Activated CD8-positive, alpha-beta T cell treated with anti-CD3 and anti-CD28 coated beads for 36 hours (primary cell): ENCODE measurements at regions of chr7 and their contacts with region 1.

Region 1: GRCh38 chr7:97835296-97836138 is 36.7 kb downstream of the ASNS start:
- DNase-seq: peak; percentile 81
- ATAC-seq: peak; percentile 83
- H3K4me3 Mint-ChIP-seq: no peak overlapping the region
- H3K27ac Mint-ChIP-seq: no peak overlapping the region
- H3K4me1 Mint-ChIP-seq: no peaks in the 10 kb centered on the region
- H3K27me3 Mint-ChIP-seq: peaks cover 17% of the 10 kb centered on the region
- CTCF ChIP-seq: peak; percentile 77

Region 2: DNA sequence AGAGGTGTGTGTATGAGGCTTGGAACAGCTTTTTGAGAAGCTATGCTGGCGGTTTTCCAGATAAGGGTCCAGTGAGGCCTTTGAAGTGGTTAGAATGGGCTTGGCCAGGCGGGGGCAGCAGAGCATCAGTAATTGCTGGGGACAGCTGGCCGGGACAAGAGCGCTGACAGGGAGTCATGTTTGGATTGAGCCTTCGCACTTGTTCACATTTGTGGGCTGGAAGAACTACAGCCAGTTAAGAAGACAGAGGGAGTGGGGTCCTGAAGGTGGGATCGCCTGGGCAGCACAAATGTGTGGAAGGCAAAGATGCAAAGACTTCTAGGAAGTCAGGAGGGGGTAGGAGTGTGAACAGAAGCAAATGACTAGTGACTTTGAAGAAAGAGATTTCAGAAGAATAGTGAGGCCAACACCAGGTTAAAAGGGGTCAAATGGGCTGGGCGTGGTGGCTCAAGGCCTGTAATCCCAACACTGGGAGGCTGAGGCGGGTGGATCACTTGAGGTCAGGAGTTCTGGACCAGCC is 730.7 kb before region 1 on chr7:
- CTCF ChIA-PET with region 1: interaction called, 13 read pairs
- POLR2A ChIA-PET with region 1: no interaction called
- intact Hi-C with region 1: loop called (anchors 5 kb)
- DNase-seq: peak; percentile 81
- ATAC-seq: peak; percentile 84
- H3K4me3 Mint-ChIP-seq: no peak overlapping the region
- H3K27ac Mint-ChIP-seq: no peak overlapping the region
- H3K4me1 Mint-ChIP-seq: no peaks in the 10 kb centered on the region
- H3K27me3 Mint-ChIP-seq: peaks cover 26% of the 10 kb centered on the region
- CTCF ChIP-seq: peak; percentile 63

Region 3: DNA sequence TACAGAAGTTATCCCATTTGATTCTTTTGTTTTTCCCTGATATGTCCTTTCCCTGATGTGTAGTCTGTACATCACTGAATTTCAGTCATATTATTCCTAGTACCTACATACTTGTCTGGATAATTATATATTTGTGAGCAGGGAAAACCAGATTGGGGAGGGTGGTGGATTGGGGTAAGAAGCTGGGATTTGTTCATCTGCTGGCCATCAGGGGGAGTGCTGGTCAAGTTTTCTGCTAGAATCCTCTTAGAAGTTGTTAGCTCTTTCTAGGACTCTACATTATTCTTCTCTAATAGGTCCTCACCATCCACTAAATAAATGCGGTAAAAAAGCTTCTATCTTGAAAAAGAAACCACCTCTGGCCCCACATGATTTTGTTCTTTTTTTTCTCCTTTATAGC is 336.3 kb before region 1 on chr7:
- CTCF ChIA-PET with region 1: interaction called, 5 read pairs
- POLR2A ChIA-PET with region 1: no interaction called
- intact Hi-C with region 1: loop called (anchors 5 kb)
- DNase-seq: peak; percentile 28
- ATAC-seq: no peak
- H3K4me3 Mint-ChIP-seq: no peak overlapping the region
- H3K27ac Mint-ChIP-seq: no peak overlapping the region
- H3K4me1 Mint-ChIP-seq: no peaks in the 10 kb centered on the region
- H3K27me3 Mint-ChIP-seq: peaks cover 5% of the 10 kb centered on the region
- CTCF ChIP-seq: peak; percentile 41

Region 4: DNA sequence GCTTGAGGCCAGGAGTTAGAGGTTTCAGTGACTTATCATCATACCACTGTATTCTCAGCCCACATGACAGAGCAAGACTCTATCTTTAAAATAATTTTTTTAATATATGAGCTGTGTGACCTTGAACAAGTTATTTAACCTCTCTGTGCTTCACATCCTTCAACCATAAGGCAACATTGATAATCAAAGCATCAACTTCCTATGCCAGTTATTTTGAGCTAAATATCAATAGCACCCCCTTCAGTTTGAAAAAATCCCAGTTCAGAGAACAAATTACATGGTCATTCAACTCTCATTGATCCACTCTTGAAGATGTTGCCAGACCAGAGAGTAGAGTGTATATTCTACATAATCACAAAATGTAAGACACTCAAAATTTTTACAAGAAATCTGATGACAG is 16.4 kb before region 1 on chr7:
- CTCF ChIA-PET with region 1: interaction called, 10 read pairs
- POLR2A ChIA-PET with region 1: no interaction called
- intact Hi-C with region 1: no loop called
- DNase-seq: no peak
- ATAC-seq: no peak
- H3K4me3 Mint-ChIP-seq: no peak overlapping the region
- H3K27ac Mint-ChIP-seq: no peak overlapping the region
- H3K4me1 Mint-ChIP-seq: no peaks in the 10 kb centered on the region
- H3K27me3 Mint-ChIP-seq: peaks cover 5% of the 10 kb centered on the region
- CTCF ChIP-seq: no peak

Region 5: DNA sequence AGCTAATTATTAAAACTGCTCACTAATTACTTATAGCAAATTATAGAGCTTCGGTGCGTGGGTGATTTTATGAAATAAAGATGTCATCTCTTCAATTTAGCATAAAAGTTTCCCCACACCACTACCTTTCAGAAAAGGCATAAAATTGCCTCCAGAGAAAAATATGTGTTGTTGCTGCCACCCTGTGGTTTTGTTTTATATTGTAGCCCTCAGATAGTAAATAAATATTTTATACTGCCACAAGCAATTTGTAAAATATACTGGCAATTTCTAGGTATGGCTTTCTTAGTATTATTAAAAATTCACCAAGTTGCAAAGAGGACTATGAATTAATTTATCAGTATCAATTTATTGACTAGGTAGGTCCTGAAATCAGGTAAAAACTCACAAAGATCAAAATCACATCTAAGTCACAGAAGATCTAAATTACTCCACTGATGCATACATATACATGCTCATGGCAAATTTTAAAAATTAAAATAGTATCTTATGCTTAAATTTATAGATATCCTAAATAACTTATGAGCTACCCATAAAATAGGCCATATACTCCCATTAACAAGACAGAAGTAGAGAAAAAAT is 10.2 kb after region 1 on chr7:
- CTCF ChIA-PET with region 1: interaction called, 17 read pairs
- POLR2A ChIA-PET with region 1: no interaction called
- intact Hi-C with region 1: no loop called
- DNase-seq: peak; percentile 39
- ATAC-seq: no peak
- H3K4me3 Mint-ChIP-seq: no peak overlapping the region
- H3K27ac Mint-ChIP-seq: no peak overlapping the region
- H3K4me1 Mint-ChIP-seq: no peaks in the 10 kb centered on the region
- H3K27me3 Mint-ChIP-seq: no peaks in the 10 kb centered on the region
- CTCF ChIP-seq: peak; percentile 61

Region 6: DNA sequence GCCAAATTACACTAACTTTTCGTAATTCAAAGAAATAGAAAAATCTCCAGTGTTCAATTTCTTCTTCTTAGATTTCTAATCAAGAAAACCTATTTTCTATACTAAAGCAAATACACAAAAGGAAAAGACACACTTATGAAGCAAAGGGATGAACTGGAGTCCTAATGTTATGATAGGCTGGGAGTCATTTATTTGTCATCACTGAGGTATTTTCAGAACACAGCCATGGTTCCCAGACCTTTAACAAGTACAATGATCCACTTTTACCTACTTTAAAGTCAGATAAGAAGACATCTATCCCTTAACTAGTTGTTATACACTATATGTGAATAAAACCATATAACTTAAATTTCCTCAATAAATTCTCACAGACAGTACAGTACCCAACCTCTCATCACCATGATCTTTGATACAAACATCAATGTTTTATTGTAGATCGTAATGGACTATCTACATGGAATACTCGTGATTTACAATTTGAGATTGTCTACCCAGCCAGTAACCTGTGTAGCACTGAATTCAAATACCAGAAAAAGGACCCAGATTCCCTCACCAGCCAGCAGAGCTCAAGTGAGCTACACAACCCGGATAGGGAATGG is 24.2 kb after region 1 on chr7:
- CTCF ChIA-PET with region 1: no interaction called
- POLR2A ChIA-PET with region 1: no interaction called
- intact Hi-C with region 1: no loop called
- DNase-seq: no peak
- ATAC-seq: no peak
- H3K4me3 Mint-ChIP-seq: no peak overlapping the region
- H3K27ac Mint-ChIP-seq: no peak overlapping the region
- H3K4me1 Mint-ChIP-seq: peaks cover 8% of the 10 kb centered on the region
- H3K27me3 Mint-ChIP-seq: no peaks in the 10 kb centered on the region
- CTCF ChIP-seq: no peak